CD4-positive, alpha-beta memory T cell (primary cell): ENCODE measurements at regions of chr3 and their contacts with region 1.

Region 1: GRCh38 chr3:16264708-16265454 is at the starts of genes DPH3 and OXNAD1:
- DNase-seq: peak; percentile 98 to 99 (median 99)
- H3K4me3 ChIP-seq: peak within 1 kb of the TSS; percentile 83 to 98
- H3K4me3 Mint-ChIP-seq: peak within 1 kb of the TSS; percentile 98 to 100 (median 100)
- H3K27ac ChIP-seq: peak within 1 kb of the TSS; percentile 88
- H3K27ac Mint-ChIP-seq: peak within 1 kb of the TSS; percentile 97 to 100 (median 100)
- H3K4me1 ChIP-seq: peaks cover 33% of the 10 kb centered on the region
- H3K4me1 Mint-ChIP-seq: peaks cover 26 to 38% (median 30%) of the 10 kb centered on the region in 4 donors
- H3K27me3 ChIP-seq: no peaks in the 10 kb centered on the region
- H3K27me3 Mint-ChIP-seq: no peaks in the 10 kb centered on the region
- total RNA-seq, gene DPH3: 15.2 to 15.4 TPM
- total RNA-seq, gene OXNAD1: 78.5 to 84.7 TPM

Region 2: GRCh38 chr3:15098503-15099363 is 1166.1 kb before region 1 on chr3 and contains the start of gene RBSN:
- CTCF ChIA-PET with region 1: no interaction called
- POLR2A ChIA-PET with region 1: interaction called, 4 read pairs
- intact Hi-C with region 1: loop called (anchors 2 kb)
- DNase-seq: peak; percentile 96 to 98 (median 96)
- H3K4me3 ChIP-seq: peak within 1 kb of the TSS; percentile 61 to 73
- H3K4me3 Mint-ChIP-seq: peak within 1 kb of the TSS; percentile 88 to 99 (median 96)
- H3K27ac ChIP-seq: peak within 1 kb of the TSS; percentile 95
- H3K27ac Mint-ChIP-seq: peak within 1 kb of the TSS; percentile 89 to 99 (median 99)
- H3K4me1 ChIP-seq: peaks cover 22% of the 10 kb centered on the region
- H3K4me1 Mint-ChIP-seq: peaks cover 19 to 35% (median 27%) of the 10 kb centered on the region in 4 donors
- H3K27me3 ChIP-seq: no peaks in the 10 kb centered on the region
- H3K27me3 Mint-ChIP-seq: peaks cover 1 to 2% of the 10 kb centered on the region in 2 donors
- total RNA-seq, gene RBSN: 33.2 to 34.7 TPM

Region 3: DNA sequence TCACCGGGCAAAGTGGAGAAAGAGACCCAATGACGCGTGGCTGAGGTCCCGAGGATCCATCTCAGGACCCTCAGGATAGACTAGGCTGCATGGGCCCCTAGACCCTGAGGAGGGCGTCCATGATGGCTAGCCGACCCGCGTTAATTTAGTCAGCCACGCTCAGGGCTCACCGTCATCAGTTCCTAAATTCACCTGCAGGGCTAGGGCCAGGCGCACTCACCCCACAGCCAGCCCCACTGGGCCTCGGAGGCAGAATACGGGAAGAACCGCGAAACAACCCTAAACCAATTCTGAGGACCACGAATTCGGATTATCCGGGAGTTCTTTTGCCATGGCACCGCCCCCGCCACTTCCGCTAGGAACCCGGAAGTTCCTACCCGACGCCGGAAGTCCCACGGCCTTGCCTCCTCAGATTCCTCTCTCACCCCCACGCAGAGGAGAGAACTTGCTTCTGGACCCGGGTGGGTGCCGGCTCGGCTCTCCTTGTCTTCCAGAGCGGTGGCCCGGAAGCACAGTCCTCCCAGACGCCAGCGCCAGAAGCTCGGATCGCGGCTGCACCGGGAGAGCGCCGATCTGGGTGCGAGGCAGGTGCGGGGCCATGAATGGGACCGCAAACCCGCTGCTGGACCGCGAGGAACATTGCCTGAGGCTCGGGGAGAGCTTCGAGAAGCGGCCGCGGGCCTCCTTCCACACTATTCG is 837.5 kb before region 1 on chr3 and contains the starts of genes EAF1 and METTL6:
- CTCF ChIA-PET with region 1: no interaction called
- POLR2A ChIA-PET with region 1: no interaction called
- intact Hi-C with region 1: loop called (anchors 5 kb)
- DNase-seq: peak; percentile 81 to 87 (median 83)
- H3K4me3 ChIP-seq: peak within 1 kb of the TSS; percentile 99
- H3K4me3 Mint-ChIP-seq: peak within 1 kb of the TSS; percentile 88 to 99 (median 98)
- H3K27ac ChIP-seq: peak within 1 kb of the TSS; percentile 89
- H3K27ac Mint-ChIP-seq: peak within 1 kb of the TSS; percentile 83 to 98 (median 97)
- H3K4me1 ChIP-seq: peaks cover 52% of the 10 kb centered on the region
- H3K4me1 Mint-ChIP-seq: peaks cover 32 to 80% (median 59%) of the 10 kb centered on the region in 4 donors
- H3K27me3 ChIP-seq: no peaks in the 10 kb centered on the region
- H3K27me3 Mint-ChIP-seq: no peaks in the 10 kb centered on the region
- total RNA-seq, gene EAF1: 17.6 to 19.7 TPM
- total RNA-seq, gene METTL6: 17.3 to 17.4 TPM

Region 4: GRCh38 chr3:16028604-16029003 is 236.3 kb before region 1 on chr3:
- CTCF ChIA-PET with region 1: no interaction called
- POLR2A ChIA-PET with region 1: no interaction called
- intact Hi-C with region 1: no loop called
- DNase-seq: no peak
- H3K4me3 ChIP-seq: no peak overlapping the region
- H3K4me3 Mint-ChIP-seq: no peak overlapping the region
- H3K27ac ChIP-seq: no peak overlapping the region
- H3K27ac Mint-ChIP-seq: no peak overlapping the region
- H3K4me1 ChIP-seq: no peaks in the 10 kb centered on the region
- H3K4me1 Mint-ChIP-seq: no peaks in the 10 kb centered on the region
- H3K27me3 ChIP-seq: no peaks in the 10 kb centered on the region
- H3K27me3 Mint-ChIP-seq: peaks cover 0 to 19% of the 10 kb centered on the region in 2 donors

Region 5: DNA sequence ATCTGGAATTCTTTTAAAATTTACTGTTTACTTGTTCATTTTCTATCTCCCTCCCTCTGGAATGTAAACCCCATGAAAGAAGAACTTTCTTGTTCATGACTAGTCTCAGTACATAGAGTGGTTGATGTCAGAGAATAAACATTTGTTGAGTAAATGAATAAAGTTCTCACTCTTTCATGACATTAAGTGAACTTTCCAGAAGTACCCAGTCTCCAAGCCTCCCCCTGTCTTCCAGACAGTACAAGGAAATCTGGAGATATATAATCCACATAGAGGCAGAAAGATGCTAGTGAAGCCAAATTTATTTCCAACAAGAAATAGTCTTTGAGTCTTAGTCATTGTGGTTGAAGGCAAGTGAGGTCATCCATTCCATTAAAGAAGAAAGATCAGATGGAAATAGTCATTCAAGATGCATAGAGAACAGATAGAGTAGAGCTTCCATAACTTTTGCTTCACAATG is 161.9 kb before region 1 on chr3:
- CTCF ChIA-PET with region 1: no interaction called
- POLR2A ChIA-PET with region 1: no interaction called
- intact Hi-C with region 1: no loop called
- DNase-seq: no peak
- H3K4me3 ChIP-seq: no peak overlapping the region
- H3K4me3 Mint-ChIP-seq: no peak overlapping the region
- H3K27ac ChIP-seq: no peak overlapping the region
- H3K27ac Mint-ChIP-seq: no peak overlapping the region
- H3K4me1 ChIP-seq: no peaks in the 10 kb centered on the region
- H3K4me1 Mint-ChIP-seq: no peaks in the 10 kb centered on the region
- H3K27me3 ChIP-seq: no peaks in the 10 kb centered on the region
- H3K27me3 Mint-ChIP-seq: peaks cover 6 to 9% of the 10 kb centered on the region in 2 donors

Region 6: GRCh38 chr3:16148783-16149182 is 116.1 kb before region 1 on chr3:
- CTCF ChIA-PET with region 1: no interaction called
- POLR2A ChIA-PET with region 1: no interaction called
- intact Hi-C with region 1: no loop called
- DNase-seq: peak in 1 of 5 donors; percentile 1
- H3K4me3 ChIP-seq: no peak overlapping the region
- H3K4me3 Mint-ChIP-seq: no peak overlapping the region
- H3K27ac ChIP-seq: no peak overlapping the region
- H3K27ac Mint-ChIP-seq: peak overlapping the region in 2 of 7 donors; percentile 50 to 51
- H3K4me1 ChIP-seq: no peaks in the 10 kb centered on the region
- H3K4me1 Mint-ChIP-seq: peaks cover 0 to 2% (median 0%) of the 10 kb centered on the region in 4 donors
- H3K27me3 ChIP-seq: no peaks in the 10 kb centered on the region
- H3K27me3 Mint-ChIP-seq: peaks cover 6 to 17% of the 10 kb centered on the region in 2 donors

Region 7: DNA sequence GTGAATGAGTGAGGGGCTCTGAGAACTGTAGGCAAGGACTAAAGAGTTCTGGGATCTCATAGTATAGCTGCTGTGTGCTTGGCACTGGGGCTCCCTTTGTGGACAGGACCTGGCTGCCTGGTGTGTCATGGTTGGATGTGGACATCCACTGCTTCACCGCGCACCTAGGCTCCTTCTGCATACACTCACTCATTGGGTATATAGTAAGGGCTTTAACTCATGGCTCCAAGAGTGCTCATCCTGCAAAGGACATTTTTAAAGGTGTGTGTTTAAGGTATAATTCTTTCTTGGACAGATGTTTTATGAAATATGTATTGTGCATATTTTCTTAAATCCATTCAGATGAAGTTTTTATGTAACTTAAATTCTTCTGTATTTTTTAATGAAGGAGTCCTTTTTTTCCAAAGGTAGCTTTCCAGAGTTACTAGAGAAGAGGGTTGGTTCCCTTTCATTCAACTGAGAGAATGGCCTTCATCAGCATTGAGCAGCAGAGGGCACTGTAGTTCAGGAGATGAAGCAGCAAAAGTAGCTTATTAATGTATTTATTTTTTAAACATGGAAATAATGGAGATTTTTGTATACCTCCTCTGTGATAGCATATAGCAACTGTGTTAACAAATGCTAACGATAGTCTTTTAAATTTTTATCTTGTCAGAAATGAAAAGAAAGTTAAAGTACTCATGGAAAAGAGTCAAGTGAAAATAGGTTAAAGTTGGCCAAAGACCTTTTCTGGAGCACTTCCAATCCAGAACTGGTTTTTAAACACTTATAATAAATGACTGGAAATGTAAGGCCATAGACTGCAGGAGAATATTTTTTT is 25.3 kb after region 1 on chr3:
- CTCF ChIA-PET with region 1: interaction called, 72 read pairs
- POLR2A ChIA-PET with region 1: interaction called, 67 read pairs
- intact Hi-C with region 1: loop called (anchors 1 kb)
- DNase-seq: peak; percentile 58 to 67 (median 64)
- H3K4me3 ChIP-seq: peak overlapping the region; percentile 68 to 89
- H3K4me3 Mint-ChIP-seq: peak overlapping the region; percentile 93 to 99 (median 98)
- H3K27ac ChIP-seq: peak overlapping the region; percentile 76
- H3K27ac Mint-ChIP-seq: peak overlapping the region; percentile 90 to 99 (median 96)
- H3K4me1 ChIP-seq: peaks cover 78% of the 10 kb centered on the region
- H3K4me1 Mint-ChIP-seq: peaks cover 48 to 82% (median 72%) of the 10 kb centered on the region in 4 donors
- H3K27me3 ChIP-seq: no peaks in the 10 kb centered on the region
- H3K27me3 Mint-ChIP-seq: no peaks in the 10 kb centered on the region

Region 8: DNA sequence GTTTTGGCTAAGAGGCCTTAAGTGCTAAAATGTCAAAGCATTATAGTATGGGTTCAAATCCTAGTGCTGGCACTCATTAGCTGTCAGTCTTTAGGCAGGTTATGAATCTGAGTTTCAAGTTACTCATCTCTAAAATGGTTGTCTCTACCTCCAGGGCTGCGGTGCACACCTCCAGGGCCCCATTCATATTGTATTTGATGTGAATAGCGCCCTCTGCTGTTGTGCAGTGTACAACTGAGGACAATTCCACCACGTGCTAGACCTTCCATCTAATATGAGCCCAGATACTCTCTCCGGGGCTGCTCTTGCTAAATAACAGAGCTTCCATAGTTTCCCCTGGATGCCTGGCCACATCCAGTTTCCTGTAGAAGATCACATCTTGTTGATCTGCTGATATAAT is 54.4 kb after region 1 on chr3:
- CTCF ChIA-PET with region 1: interaction called, 169 read pairs
- POLR2A ChIA-PET with region 1: interaction called, 23 read pairs
- intact Hi-C with region 1: loop called (anchors 1 kb)
- DNase-seq: peak; percentile 79 to 89 (median 81)
- H3K4me3 ChIP-seq: no peak overlapping the region
- H3K4me3 Mint-ChIP-seq: peak overlapping the region in 6 of 8 donors; percentile 17 to 80 (median 36)
- H3K27ac ChIP-seq: peak overlapping the region; percentile 31
- H3K27ac Mint-ChIP-seq: peak overlapping the region; percentile 87 to 95 (median 93)
- H3K4me1 ChIP-seq: peaks cover 61% of the 10 kb centered on the region
- H3K4me1 Mint-ChIP-seq: peaks cover 53 to 79% (median 63%) of the 10 kb centered on the region in 4 donors
- H3K27me3 ChIP-seq: no peaks in the 10 kb centered on the region
- H3K27me3 Mint-ChIP-seq: no peaks in the 10 kb centered on the region

Region 9: DNA sequence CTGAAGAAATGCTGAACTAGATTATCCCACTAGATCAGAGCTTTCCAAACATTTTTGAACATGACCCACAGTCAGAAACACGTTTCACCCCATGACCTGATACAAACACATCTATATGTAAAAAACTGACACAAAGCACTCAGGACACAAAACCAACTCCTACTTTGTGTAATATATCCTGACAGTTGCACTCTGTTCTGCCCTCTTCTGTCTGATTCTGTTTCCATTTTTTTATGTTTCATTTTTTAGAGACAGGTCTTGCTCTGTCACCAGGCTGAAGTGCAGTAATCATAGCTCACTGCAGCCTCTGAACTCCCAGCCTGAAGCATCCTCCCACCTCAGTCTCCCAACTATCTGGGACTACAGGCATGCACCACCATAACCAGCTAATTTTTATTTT is 264.4 kb after region 1 on chr3:
- CTCF ChIA-PET with region 1: interaction called, 54 read pairs
- POLR2A ChIA-PET with region 1: interaction called, 4 read pairs
- intact Hi-C with region 1: loop called (anchors 1 kb)
- DNase-seq: peak in 3 of 5 donors; percentile 13 to 22 (median 16)
- H3K4me3 ChIP-seq: no peak overlapping the region
- H3K4me3 Mint-ChIP-seq: no peak overlapping the region
- H3K27ac ChIP-seq: no peak overlapping the region
- H3K27ac Mint-ChIP-seq: peak overlapping the region in 2 of 7 donors; percentile 64 to 65
- H3K4me1 ChIP-seq: no peaks in the 10 kb centered on the region
- H3K4me1 Mint-ChIP-seq: peaks cover 0 to 5% (median 2%) of the 10 kb centered on the region in 4 donors
- H3K27me3 ChIP-seq: no peaks in the 10 kb centered on the region
- H3K27me3 Mint-ChIP-seq: peaks cover 0 to 1% of the 10 kb centered on the region in 2 donors

Region 10: GRCh38 chr3:17233398-17233800 is 968.5 kb after region 1 on chr3:
- CTCF ChIA-PET with region 1: interaction called, 3 read pairs
- POLR2A ChIA-PET with region 1: no interaction called
- intact Hi-C with region 1: loop called (anchors 5 kb)
- DNase-seq: peak; percentile 56 to 69 (median 66)
- H3K4me3 ChIP-seq: no peak overlapping the region
- H3K4me3 Mint-ChIP-seq: peak overlapping the region in 2 of 8 donors; percentile 0
- H3K27ac ChIP-seq: no peak overlapping the region
- H3K27ac Mint-ChIP-seq: peak overlapping the region in 4 of 7 donors; percentile 1 to 84 (median 36)
- H3K4me1 ChIP-seq: peaks cover 18% of the 10 kb centered on the region
- H3K4me1 Mint-ChIP-seq: peaks cover 17 to 28% (median 25%) of the 10 kb centered on the region in 4 donors
- H3K27me3 ChIP-seq: no peaks in the 10 kb centered on the region
- H3K27me3 Mint-ChIP-seq: no peaks in the 10 kb centered on the region